Tibial artery (tissue), 4 donors: ENCODE measurements at regions of chr12 and their contacts with region 1.

Region 1: GRCh38 chr12:11553871-11554533 is 95.5 kb upstream of the ETV6 start:
- DNase-seq: peak in 1 of 2 donors; percentile 50
- H3K4me3 ChIP-seq: peak overlapping the region; percentile 7 to 50
- H3K27ac ChIP-seq: peak overlapping the region; percentile 43 to 89
- H3K4me1 ChIP-seq: peaks cover 0 to 21% (median 11%) of the 10 kb centered on the region in 4 donors
- H3K27me3 ChIP-seq: no peaks in the 10 kb centered on the region
- CTCF ChIP-seq: peak; percentile 58 to 60

Region 2: GRCh38 chr12:11780521-11781101 is 226.6 kb after region 1 on chr12:
- intact Hi-C with region 1: no loop called
- DNase-seq: no peak
- H3K4me3 ChIP-seq: no peak overlapping the region
- H3K27ac ChIP-seq: peak overlapping the region; percentile 78 to 81
- H3K4me1 ChIP-seq: peaks cover 0 to 91% (median 53%) of the 10 kb centered on the region in 4 donors
- H3K27me3 ChIP-seq: no peaks in the 10 kb centered on the region
- CTCF ChIP-seq: no peak

Region 3: GRCh38 chr12:12916135-12916944 is 1362.3 kb after region 1 on chr12:
- intact Hi-C with region 1: loop called (anchors 10 kb)
- DNase-seq: peak; percentile 91 to 92
- H3K4me3 ChIP-seq: peak overlapping the region in 1 of 2 donors; percentile 10
- H3K27ac ChIP-seq: peak overlapping the region; percentile 44 to 57
- H3K4me1 ChIP-seq: peaks cover 0 to 13% (median 7%) of the 10 kb centered on the region in 4 donors
- H3K27me3 ChIP-seq: no peaks in the 10 kb centered on the region
- CTCF ChIP-seq: peak; percentile 95 to 98